GM12878 (cell line): ENCODE measurements at regions of chr9 and their contacts with region 1.

Region 1: GRCh38 chr9:107919263-107919662 is 429.7 kb upstream of the KLF4 start:
- DNase-seq: no peak
- ATAC-seq: no peak
- H3K4me3 ChIP-seq: no peak overlapping the region
- H3K27ac ChIP-seq: no peak overlapping the region
- H3K4me1 ChIP-seq: no peaks in the 10 kb centered on the region
- H3K27me3 ChIP-seq: no peaks in the 10 kb centered on the region
- CTCF ChIP-seq: no peak
- EP300 ChIP-seq: no peak
- POLR2A ChIP-seq: no peak
- RAD21 ChIP-seq: no peak

Region 2: GRCh38 chr9:107905308-107906020 is 13.8 kb before region 1 on chr9:
- CTCF ChIA-PET with region 1: no interaction called
- POLR2A ChIA-PET with region 1: no interaction called
- RAD21 ChIA-PET with region 1: no interaction called
- SMC1A ChIA-PET with region 1: interaction called, 10 read pairs
- in situ Hi-C with region 1: no loop called
- intact Hi-C with region 1: no loop called
- DNase-seq: no peak
- ATAC-seq: no peak
- H3K4me3 ChIP-seq: no peak overlapping the region
- H3K27ac ChIP-seq: no peak overlapping the region
- H3K4me1 ChIP-seq: no peaks in the 10 kb centered on the region
- H3K27me3 ChIP-seq: no peaks in the 10 kb centered on the region
- CTCF ChIP-seq: no peak
- EP300 ChIP-seq: no peak
- POLR2A ChIP-seq: no peak
- RAD21 ChIP-seq: no peak

Region 3: DNA sequence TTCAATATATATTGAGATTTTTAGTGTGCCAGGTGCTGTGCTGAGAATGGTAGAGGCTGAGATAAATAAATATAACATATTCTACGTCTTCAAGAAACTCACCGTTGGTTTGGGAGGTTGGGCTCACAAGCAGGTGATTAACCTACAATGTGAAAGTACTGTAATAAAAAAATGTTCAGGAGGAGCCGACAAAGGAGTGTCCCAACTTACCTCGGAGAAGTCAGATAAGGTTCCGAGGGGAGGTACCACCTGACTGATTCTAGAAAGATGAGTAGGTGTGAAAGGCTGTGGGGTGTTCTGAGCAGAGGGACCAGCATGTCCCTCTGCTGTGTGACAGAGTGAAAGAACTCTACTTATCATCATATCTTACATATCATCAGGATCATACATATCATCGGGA is 49.9 kb after region 1 on chr9:
- CTCF ChIA-PET with region 1: no interaction called
- POLR2A ChIA-PET with region 1: no interaction called
- RAD21 ChIA-PET with region 1: no interaction called
- SMC1A ChIA-PET with region 1: no interaction called
- in situ Hi-C with region 1: loop called (anchors 5 kb)
- intact Hi-C with region 1: no loop called
- DNase-seq: no peak
- ATAC-seq: no peak
- H3K4me3 ChIP-seq: no peak overlapping the region
- H3K27ac ChIP-seq: no peak overlapping the region
- H3K4me1 ChIP-seq: no peaks in the 10 kb centered on the region
- H3K27me3 ChIP-seq: no peaks in the 10 kb centered on the region; a peak in 1 of 4 replicates
- CTCF ChIP-seq: no peak
- EP300 ChIP-seq: no peak
- POLR2A ChIP-seq: no peak
- RAD21 ChIP-seq: no peak

Region 4: GRCh38 chr9:108003526-108003925 is 84.3 kb after region 1 on chr9:
- CTCF ChIA-PET with region 1: no interaction called
- POLR2A ChIA-PET with region 1: no interaction called
- RAD21 ChIA-PET with region 1: no interaction called
- SMC1A ChIA-PET with region 1: no interaction called
- in situ Hi-C with region 1: no loop called
- intact Hi-C with region 1: no loop called
- DNase-seq: no peak
- ATAC-seq: no peak
- H3K4me3 ChIP-seq: no peak overlapping the region
- H3K27ac ChIP-seq: no peak overlapping the region
- H3K4me1 ChIP-seq: no peaks in the 10 kb centered on the region
- H3K27me3 ChIP-seq: no peaks in the 10 kb centered on the region
- CTCF ChIP-seq: no peak
- EP300 ChIP-seq: no peak
- POLR2A ChIP-seq: no peak
- RAD21 ChIP-seq: no peak